Ovary (tissue), 10 donors: ENCODE measurements at regions of chr12 and their contacts with region 1.

Region 1: GRCh38 chr12:751192-751998 is 984 bp upstream of the WNK1 start:
- DNase-seq: peak; percentile 88 to 95 (median 90)
- H3K4me3 ChIP-seq: peak overlapping the region; percentile 73
- H3K27ac ChIP-seq: peak overlapping the region; percentile 37 to 79
- H3K4me1 ChIP-seq: peaks cover 4% of the 10 kb centered on the region
- H3K27me3 ChIP-seq: no peaks in the 10 kb centered on the region
- CTCF ChIP-seq: peak; percentile 49 to 74 (median 72)
- EP300 ChIP-seq: no peak
- POLR2A ChIP-seq: peak; percentile 27

Region 2: GRCh38 chr12:569803-570434 is 181.5 kb before region 1 on chr12:
- intact Hi-C with region 1: loop called (anchors 5 to 10 kb)
- DNase-seq: peak; percentile 86 to 95 (median 93)
- H3K4me3 ChIP-seq: peak overlapping the region; percentile 55
- H3K27ac ChIP-seq: peak overlapping the region; percentile 78 to 88
- H3K4me1 ChIP-seq: peaks cover 12% of the 10 kb centered on the region
- H3K27me3 ChIP-seq: no peaks in the 10 kb centered on the region
- CTCF ChIP-seq: peak; percentile 90 to 96 (median 96)
- EP300 ChIP-seq: no peak
- POLR2A ChIP-seq: peak; percentile 21

Region 3: GRCh38 chr12:575948-576612 is 175.3 kb before region 1 on chr12:
- intact Hi-C with region 1: loop called (anchors 5 to 10 kb)
- DNase-seq: peak; percentile 63 to 89 (median 80)
- H3K4me3 ChIP-seq: no peak overlapping the region
- H3K27ac ChIP-seq: peak overlapping the region in 1 of 2 donors; percentile 53
- H3K4me1 ChIP-seq: peaks cover 13% of the 10 kb centered on the region
- H3K27me3 ChIP-seq: no peaks in the 10 kb centered on the region
- CTCF ChIP-seq: peak; percentile 98 to 99 (median 98)
- EP300 ChIP-seq: no peak
- POLR2A ChIP-seq: no peak

Region 4: DNA sequence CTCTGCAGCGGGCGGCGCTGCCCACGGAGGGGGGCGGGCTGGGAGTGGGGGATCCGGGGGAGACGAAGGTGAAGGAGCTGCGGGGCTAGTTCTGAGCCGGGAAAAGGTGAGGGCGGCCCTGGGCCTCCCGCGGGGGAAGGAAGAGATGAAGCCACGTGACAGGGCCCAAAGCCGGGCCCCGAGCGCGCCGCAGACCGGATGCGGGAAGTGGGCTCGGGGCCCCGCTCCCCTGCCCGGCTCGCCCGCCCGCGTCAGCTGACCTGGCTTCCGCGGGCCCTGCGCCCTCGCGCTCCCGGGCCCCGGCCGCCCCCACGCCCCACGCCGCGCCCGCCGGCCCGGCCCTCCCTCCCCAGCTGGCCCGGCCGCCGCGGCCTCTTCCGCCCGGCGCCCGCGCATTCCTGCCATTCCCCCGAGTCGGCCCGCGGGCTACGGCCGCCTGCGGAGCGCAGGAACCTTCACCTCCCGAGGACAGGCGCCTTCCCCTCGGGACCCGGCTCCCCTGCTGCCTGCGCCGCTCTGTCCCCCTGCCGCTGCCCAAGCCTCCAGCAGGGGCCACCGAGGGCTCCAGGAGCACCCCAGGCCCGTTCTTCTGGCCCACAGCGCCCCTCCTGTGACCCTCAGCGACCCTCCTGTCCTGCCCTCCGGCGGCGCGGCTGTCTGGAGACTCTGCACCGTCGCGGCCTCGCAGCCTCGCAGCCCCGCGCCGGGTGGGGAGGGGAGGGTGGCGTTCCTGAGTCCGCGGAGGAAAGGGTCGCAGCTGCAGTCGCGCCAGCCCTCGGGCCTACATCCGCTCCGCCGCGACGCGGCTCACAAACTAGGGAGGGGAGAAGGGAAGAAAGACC is 108.5 kb before region 1 on chr12:
- intact Hi-C with region 1: loop called in 1 of 4 experiments (anchors 5 kb)
- DNase-seq: peak; percentile 77 to 86 (median 78)
- H3K4me3 ChIP-seq: peak overlapping the region; percentile 65
- H3K27ac ChIP-seq: peak overlapping the region; percentile 84 to 89
- H3K4me1 ChIP-seq: peaks cover 19% of the 10 kb centered on the region
- H3K27me3 ChIP-seq: no peaks in the 10 kb centered on the region
- CTCF ChIP-seq: no peak
- EP300 ChIP-seq: no peak
- POLR2A ChIP-seq: no peak

Region 5: DNA sequence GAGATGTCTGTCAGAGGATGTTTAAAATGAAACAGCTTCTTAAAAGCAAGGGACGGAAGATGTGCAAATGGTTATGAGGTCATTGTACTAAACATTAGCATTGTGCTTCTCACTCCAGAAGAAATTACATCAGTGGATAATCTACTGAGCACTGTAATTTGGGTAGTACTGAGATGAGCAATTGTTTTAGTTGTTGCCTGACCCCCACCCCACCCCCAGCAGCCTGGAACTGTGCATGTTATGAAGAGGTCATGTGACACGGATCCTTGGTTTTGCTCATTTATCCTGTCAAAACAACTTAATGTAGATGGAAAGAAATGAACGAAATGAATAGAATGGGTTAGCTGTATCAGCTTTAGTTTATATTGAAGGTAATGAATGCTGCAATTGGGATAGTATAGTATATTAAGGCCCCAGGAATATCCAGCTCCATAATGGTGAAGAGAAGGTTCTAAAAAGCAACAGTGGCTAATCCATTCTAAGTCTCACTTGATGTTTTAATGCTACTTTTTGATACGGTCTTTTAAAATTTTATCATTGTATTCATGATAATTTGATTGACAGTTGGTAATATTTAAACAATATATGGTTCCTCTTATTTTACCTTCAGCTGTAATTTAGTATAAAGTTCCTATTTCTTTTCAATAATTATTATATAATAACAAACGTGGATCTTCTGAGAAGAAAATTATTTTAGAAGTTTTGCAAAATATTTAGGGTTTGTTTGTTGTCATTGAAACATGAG is 59.4 kb after region 1 on chr12:
- intact Hi-C with region 1: loop called in 2 of 4 experiments (anchors 5 to 10 kb)
- DNase-seq: no peak
- H3K4me3 ChIP-seq: no peak overlapping the region
- H3K27ac ChIP-seq: no peak overlapping the region
- H3K4me1 ChIP-seq: peaks cover 3% of the 10 kb centered on the region
- H3K27me3 ChIP-seq: no peaks in the 10 kb centered on the region
- CTCF ChIP-seq: no peak
- EP300 ChIP-seq: no peak
- POLR2A ChIP-seq: no peak

Region 6: DNA sequence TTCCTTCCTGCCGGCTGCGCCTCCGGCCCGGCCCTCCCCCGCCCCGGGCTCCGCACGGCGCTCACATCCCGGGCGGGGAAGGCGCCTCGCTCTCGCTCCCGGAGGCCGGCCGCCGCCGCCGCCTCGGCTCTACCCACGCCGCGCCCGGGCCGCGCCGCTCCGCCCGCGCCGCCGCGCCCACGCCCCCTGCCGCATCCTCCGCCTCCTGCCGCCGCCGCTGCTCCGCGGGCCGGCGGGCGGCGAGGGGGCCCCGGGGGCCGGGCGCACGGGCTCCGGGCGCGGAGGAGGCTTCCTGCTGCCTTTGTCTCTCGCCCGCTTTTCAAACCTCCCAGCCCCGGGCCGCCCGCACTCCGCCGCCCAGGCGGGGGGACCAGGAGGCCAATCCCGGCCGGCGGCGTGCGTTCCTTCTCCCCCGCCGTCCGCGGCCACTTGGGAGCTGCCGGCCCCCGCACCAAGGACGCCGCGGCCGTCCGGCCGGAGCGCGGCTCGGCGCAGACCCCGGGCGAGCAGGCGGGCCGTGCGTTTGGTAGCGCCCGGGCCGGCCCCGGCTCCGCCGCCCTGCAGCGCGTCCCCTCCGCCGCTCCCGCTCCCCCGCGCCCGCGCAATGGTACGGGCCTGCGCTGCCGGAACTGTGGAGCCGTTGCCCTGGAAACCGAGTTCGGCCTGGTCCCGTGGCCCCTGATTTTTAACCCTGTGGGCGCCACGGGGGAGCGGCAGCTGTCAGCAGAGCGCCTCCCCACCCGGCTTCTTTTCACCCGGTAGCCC is 843.0 kb after region 1 on chr12 and contains the start of gene FBXL14:
- intact Hi-C with region 1: loop called in 1 of 4 experiments (anchors 10 kb)
- DNase-seq: peak; percentile 89 to 93 (median 92)
- H3K4me3 ChIP-seq: peak within 1 kb of the TSS; percentile 68
- H3K27ac ChIP-seq: peak within 1 kb of the TSS; percentile 86 to 87
- H3K4me1 ChIP-seq: peaks cover 18% of the 10 kb centered on the region
- H3K27me3 ChIP-seq: no peaks in the 10 kb centered on the region
- CTCF ChIP-seq: peak in 1 of 3 donors; percentile 13
- EP300 ChIP-seq: peak; percentile 30
- POLR2A ChIP-seq: peak; percentile 34
- total RNA-seq, gene FBXL14: 8.3 to 16.2 (median 12.0) TPM